ENCODE measurements at regions of chr11 and their contacts with region 1.

Region 1: DNA sequence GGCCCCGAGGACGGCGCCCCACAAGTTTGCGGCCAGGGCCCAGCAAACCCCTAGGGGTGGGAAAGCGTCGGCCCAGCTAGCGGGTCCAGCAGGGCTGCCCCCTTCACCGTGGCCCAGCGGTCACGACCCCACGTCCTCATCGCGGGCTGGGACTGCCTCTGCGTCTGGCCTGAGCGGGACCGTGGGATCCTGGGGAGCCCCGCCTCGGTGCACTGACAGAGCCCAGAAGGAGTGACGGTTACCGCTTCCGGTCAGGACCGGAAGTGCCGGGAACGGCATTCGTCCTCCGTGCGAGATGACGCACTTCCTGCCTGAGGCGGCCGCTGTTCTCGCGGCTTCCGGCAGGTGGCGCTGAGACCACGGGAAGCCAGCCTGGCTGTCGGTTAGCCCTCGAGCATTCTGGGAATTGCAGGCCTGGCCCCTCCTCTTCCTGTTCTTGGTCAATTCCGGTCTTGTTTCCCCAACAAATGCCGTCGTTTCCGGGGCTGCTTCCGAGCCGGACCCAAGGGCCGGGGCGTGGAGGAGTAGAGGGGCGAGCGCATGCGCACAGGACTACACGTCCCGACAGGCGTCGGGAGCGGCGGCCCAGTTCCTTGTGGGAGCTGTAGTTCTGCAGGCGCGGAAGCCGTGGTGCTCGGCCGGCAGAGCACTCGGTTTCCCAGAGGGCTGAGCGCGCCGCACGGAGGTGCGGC is at the start of gene TSSC4:
- DNase-seq: peak; percentile 99 to 100
- H3K4me3 ChIP-seq: peak within 1 kb of the TSS; percentile 89 to 93
- H3K27ac ChIP-seq: peak within 1 kb of the TSS; percentile 100
- H3K4me1 ChIP-seq: peaks cover 12 to 26% of the 10 kb centered on the region in 2 donors
- H3K27me3 ChIP-seq: no peaks in the 10 kb centered on the region
- CTCF ChIP-seq: peak; percentile 93 to 98 (median 97)
- total RNA-seq, gene TSSC4: 183 TPM

Region 2: GRCh38 chr11:1564535-1565172 is 835.6 kb before region 1 on chr11:
- intact Hi-C with region 1: loop called (anchors 10 kb)
- DNase-seq: peak; percentile 66 to 89
- H3K4me3 ChIP-seq: no peak overlapping the region
- H3K27ac ChIP-seq: peak overlapping the region; percentile 12 to 63
- H3K4me1 ChIP-seq: peaks cover 3 to 22% of the 10 kb centered on the region in 2 donors
- H3K27me3 ChIP-seq: no peaks in the 10 kb centered on the region
- CTCF ChIP-seq: no peak

Region 3: GRCh38 chr11:1827095-1827813 is 573.0 kb before region 1 on chr11:
- intact Hi-C with region 1: loop called (anchors 2 kb)
- DNase-seq: peak; percentile 51 to 93
- H3K4me3 ChIP-seq: peak overlapping the region in 1 of 2 donors; percentile 38
- H3K27ac ChIP-seq: peak overlapping the region; percentile 94 to 96
- H3K4me1 ChIP-seq: peaks cover 60 to 76% of the 10 kb centered on the region in 2 donors
- H3K27me3 ChIP-seq: no peaks in the 10 kb centered on the region
- CTCF ChIP-seq: peak in 1 of 3 experiments; percentile 13

Region 4: GRCh38 chr11:2377511-2378443 is 22.4 kb before region 1 on chr11:
- intact Hi-C with region 1: loop called (anchors 1 kb)
- DNase-seq: peak in 1 of 2 donors; percentile 87
- H3K4me3 ChIP-seq: peak overlapping the region; percentile 79 to 98
- H3K27ac ChIP-seq: peak overlapping the region; percentile 97 to 99
- H3K4me1 ChIP-seq: peaks cover 14 to 37% of the 10 kb centered on the region in 2 donors
- H3K27me3 ChIP-seq: no peaks in the 10 kb centered on the region
- CTCF ChIP-seq: no peak

Measured in ascending aorta (tissue), 2 donors.